Activated B cell treated with CpG ODN at 0.5 μM for 24 hours (primary cell): ENCODE measurements at regions of chrX and their contacts with region 1.

Region 1: DNA sequence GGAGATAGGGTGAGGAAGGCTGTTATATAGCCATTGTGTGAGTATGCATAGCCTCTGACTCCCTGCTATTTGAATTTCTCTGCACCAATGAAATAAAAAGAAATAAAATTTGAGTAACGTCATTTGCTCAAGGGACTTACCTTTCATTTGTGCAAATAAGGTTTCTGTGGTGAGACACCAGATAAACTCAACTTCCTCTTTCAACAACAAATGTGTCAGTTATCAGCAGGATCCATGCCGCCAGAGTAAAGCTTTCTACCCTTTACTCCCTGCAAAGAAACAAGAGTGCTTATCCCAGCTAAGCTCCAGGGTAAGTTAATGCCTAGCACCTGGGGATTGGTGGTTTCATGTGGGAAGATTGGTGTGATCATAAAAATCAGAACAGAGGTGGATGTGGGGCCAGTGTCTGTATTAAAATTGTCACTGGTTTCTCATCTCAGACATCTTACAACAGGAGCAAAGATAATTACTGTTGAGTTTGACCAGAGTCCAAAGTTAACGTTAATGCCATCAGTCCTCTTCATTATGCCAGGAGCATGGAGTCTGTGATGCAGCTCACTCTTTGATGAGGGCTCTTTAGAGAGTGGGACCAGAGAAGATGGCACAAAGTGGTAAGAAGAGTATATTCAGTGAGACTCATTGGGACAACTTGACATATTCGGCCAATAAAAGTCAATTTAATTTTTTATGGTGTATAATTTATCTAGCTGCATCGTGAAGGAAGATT is at the start of gene P2RY10:
- DNase-seq: no peak
- ATAC-seq: peak; percentile 78
- H3K4me3 Mint-ChIP-seq: peak within 1 kb of the TSS; percentile 97
- H3K27ac Mint-ChIP-seq: peak within 1 kb of the TSS; percentile 98
- H3K4me1 Mint-ChIP-seq: peaks cover 63% of the 10 kb centered on the region
- H3K27me3 Mint-ChIP-seq: no peaks in the 10 kb centered on the region
- CTCF ChIP-seq: no peak
- total RNA-seq, gene P2RY10: 72.7 and 80.5 TPM in 2 replicates

Region 2: GRCh38 chrX:77899081-77899828 is 1046.1 kb before region 1 on chrX and contains the start of gene COX7B:
- CTCF ChIA-PET with region 1: no interaction called
- POLR2A ChIA-PET with region 1: no interaction called
- intact Hi-C with region 1: loop called (anchors 5 kb)
- DNase-seq: no peak
- ATAC-seq: peak; percentile 71
- H3K4me3 Mint-ChIP-seq: peak within 1 kb of the TSS; percentile 94
- H3K27ac Mint-ChIP-seq: peak within 1 kb of the TSS; percentile 95
- H3K4me1 Mint-ChIP-seq: peaks cover 27% of the 10 kb centered on the region
- H3K27me3 Mint-ChIP-seq: no peaks in the 10 kb centered on the region
- CTCF ChIP-seq: no peak
- total RNA-seq, gene COX7B: 196 and 235 TPM in 2 replicates

Region 3: DNA sequence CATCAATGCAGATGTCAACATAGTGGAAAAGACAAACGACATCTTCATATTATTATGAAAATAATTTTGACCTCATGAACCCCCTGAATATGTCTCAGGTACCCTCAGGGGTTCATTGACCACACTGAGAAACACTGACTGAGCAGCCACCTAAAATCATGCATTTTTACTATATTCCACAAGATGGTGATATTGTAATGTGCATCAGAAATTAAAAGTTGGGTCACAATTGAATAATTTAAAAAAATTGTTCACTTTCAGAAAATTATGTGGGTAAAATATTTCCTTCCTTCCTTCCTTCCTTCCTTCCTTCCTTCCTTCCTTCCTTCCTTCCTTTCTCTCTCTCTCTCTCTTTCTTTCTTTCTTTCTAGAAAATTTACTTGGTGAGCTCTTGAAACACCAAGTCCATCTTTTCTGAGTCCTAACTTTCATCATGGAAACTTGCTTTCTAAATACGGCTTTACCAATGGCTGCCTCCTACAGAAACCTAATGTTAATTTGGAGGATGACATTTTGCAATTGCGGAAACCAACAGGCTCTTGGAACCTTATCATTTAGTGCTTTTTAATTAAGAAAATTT is 389.9 kb before region 1 on chrX:
- CTCF ChIA-PET with region 1: no interaction called
- POLR2A ChIA-PET with region 1: no interaction called
- intact Hi-C with region 1: loop called (anchors 5 kb)
- DNase-seq: no peak
- ATAC-seq: no peak
- H3K4me3 Mint-ChIP-seq: no peak overlapping the region
- H3K27ac Mint-ChIP-seq: peak overlapping the region; percentile 75
- H3K4me1 Mint-ChIP-seq: peaks cover 13% of the 10 kb centered on the region
- H3K27me3 Mint-ChIP-seq: no peaks in the 10 kb centered on the region
- CTCF ChIP-seq: no peak

Region 4: GRCh38 chrX:78923198-78924015 is 21.9 kb before region 1 on chrX:
- CTCF ChIA-PET with region 1: no interaction called
- POLR2A ChIA-PET with region 1: interaction called, 10 read pairs
- intact Hi-C with region 1: loop called (anchors 2 kb)
- DNase-seq: no peak
- ATAC-seq: peak; percentile 58
- H3K4me3 Mint-ChIP-seq: peak overlapping the region; percentile 58
- H3K27ac Mint-ChIP-seq: peak overlapping the region; percentile 88
- H3K4me1 Mint-ChIP-seq: peaks cover 16% of the 10 kb centered on the region
- H3K27me3 Mint-ChIP-seq: no peaks in the 10 kb centered on the region
- CTCF ChIP-seq: no peak

Region 5: DNA sequence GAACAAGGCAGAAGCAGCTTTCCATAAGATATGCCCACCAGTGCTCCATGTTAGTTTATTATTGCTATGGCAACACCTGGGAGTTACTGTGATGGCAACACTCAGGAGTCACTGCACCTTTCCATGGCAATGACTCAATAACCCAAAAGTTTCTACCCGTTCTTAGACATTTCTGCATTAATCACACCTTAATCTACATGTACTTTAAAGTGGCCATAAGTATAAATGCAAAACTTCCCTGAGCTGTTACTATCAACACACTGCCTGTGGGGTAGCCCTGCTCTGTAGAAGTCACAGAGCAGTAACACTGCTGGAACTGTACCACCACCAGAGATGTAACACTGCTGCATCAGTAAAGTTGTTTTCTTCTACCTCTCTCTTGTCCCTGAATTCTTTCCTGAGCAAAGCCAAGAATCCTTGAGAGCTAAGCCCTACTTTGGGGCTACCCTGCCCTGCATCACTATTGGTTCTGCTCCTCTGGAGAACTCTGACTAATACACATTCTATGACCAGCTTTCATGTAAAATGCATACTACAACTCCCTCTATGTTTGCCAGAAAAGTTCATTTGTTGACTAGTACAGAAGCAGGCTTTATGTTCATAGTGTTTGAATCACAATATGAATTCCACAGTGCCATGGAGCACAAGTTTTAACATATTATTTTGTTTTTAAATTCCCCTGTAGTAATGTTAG is 155.6 kb after region 1 on chrX:
- CTCF ChIA-PET with region 1: no interaction called
- POLR2A ChIA-PET with region 1: no interaction called
- intact Hi-C with region 1: no loop called
- DNase-seq: no peak
- ATAC-seq: no peak
- H3K4me3 Mint-ChIP-seq: no peak overlapping the region
- H3K27ac Mint-ChIP-seq: peak overlapping the region; percentile 67
- H3K4me1 Mint-ChIP-seq: peaks cover 25% of the 10 kb centered on the region
- H3K27me3 Mint-ChIP-seq: no peaks in the 10 kb centered on the region
- CTCF ChIP-seq: no peak

Region 6: GRCh38 chrX:79138658-79139241 is 193.4 kb after region 1 on chrX:
- CTCF ChIA-PET with region 1: no interaction called
- POLR2A ChIA-PET with region 1: no interaction called
- intact Hi-C with region 1: loop called (anchors 5 kb)
- DNase-seq: no peak
- ATAC-seq: peak; percentile 89
- H3K4me3 Mint-ChIP-seq: peak overlapping the region; percentile 55
- H3K27ac Mint-ChIP-seq: peak overlapping the region; percentile 91
- H3K4me1 Mint-ChIP-seq: peaks cover 57% of the 10 kb centered on the region
- H3K27me3 Mint-ChIP-seq: no peaks in the 10 kb centered on the region
- CTCF ChIP-seq: no peak

Region 7: GRCh38 chrX:80808160-80808735 is 1862.9 kb after region 1 on chrX:
- CTCF ChIA-PET with region 1: no interaction called
- POLR2A ChIA-PET with region 1: no interaction called
- intact Hi-C with region 1: loop called (anchors 10 kb)
- DNase-seq: peak; percentile 65
- ATAC-seq: peak; percentile 59
- H3K4me3 Mint-ChIP-seq: peak overlapping the region; percentile 92
- H3K27ac Mint-ChIP-seq: peak overlapping the region; percentile 90
- H3K4me1 Mint-ChIP-seq: peaks cover 32% of the 10 kb centered on the region
- H3K27me3 Mint-ChIP-seq: no peaks in the 10 kb centered on the region
- CTCF ChIP-seq: no peak